ENCODE measurements at regions of chr16 and their contacts with region 1.

Region 1: DNA sequence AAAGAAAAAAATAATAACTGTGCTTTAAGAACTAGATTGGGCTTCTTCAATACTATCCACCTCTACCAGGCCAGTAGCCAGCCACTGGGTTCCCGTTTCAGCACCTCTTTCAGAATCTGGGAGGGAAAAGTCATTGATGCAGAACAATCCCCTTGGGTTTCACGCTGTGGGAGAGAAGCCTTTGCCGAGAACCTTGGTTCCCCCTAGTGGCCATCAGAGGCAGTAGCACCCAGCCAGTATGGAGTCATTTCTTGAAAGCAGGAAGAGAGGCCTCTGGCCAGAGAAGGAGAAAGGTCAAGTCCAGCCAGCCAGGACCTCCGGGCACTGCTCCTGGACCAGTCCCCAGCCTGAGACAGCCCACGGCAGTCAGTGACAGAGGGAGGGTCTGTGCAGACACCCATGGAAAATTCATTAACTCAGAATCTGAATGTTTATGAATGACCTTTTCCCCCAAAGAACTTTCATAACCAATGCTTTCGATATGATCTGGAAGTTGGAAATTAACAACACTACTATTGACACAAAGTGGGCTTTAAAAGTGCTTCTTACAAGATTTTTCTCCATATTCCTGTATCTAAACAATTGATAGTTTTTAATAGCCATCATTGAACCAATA is 51.2 kb upstream of the CDH5 start:
- DNase-seq: peak; percentile 7 to 72 (median 30)
- ATAC-seq: peak; percentile 78
- H3K4me3 ChIP-seq: no peak overlapping the region
- H3K4me3 Mint-ChIP-seq: no peak overlapping the region
- H3K27ac ChIP-seq: no peak overlapping the region
- H3K27ac Mint-ChIP-seq: no peak overlapping the region
- H3K4me1 ChIP-seq: peaks cover 4% of the 10 kb centered on the region
- H3K4me1 Mint-ChIP-seq: no peaks in the 10 kb centered on the region
- H3K27me3 ChIP-seq: peaks cover 0 to 9% of the 10 kb centered on the region in 2 experiments
- H3K27me3 Mint-ChIP-seq: peaks cover 20% of the 10 kb centered on the region
- CTCF ChIP-seq: peak; percentile 96

Region 2: GRCh38 chr16:66275775-66276428 is 39.4 kb before region 1 on chr16:
- CTCF ChIA-PET with region 1: no interaction called
- POLR2A ChIA-PET with region 1: no interaction called
- intact Hi-C with region 1: loop called (anchors 2 kb)
- DNase-seq: peak in 4 of 14 experiments; percentile 7 to 34 (median 22)
- ATAC-seq: no peak
- H3K4me3 ChIP-seq: no peak overlapping the region
- H3K4me3 Mint-ChIP-seq: no peak overlapping the region
- H3K27ac ChIP-seq: no peak overlapping the region
- H3K27ac Mint-ChIP-seq: no peak overlapping the region
- H3K4me1 ChIP-seq: peaks cover 4% of the 10 kb centered on the region
- H3K4me1 Mint-ChIP-seq: peaks cover 11% of the 10 kb centered on the region
- H3K27me3 ChIP-seq: peaks cover 12 to 15% of the 10 kb centered on the region in 2 experiments
- H3K27me3 Mint-ChIP-seq: peaks cover 39% of the 10 kb centered on the region
- CTCF ChIP-seq: peak; percentile 49

Measured in CD4-positive, alpha-beta T cell (primary cell).